Activated CD4-positive, alpha-beta memory T cell treated with anti-CD3 and anti-CD28 coated beads, Interleukin-2, amount 10 ng/mL, durations not matched to agents 7 days and 5 days (primary cell): ENCODE measurements at regions of chr1 and their contacts with region 1.

Region 1: DNA sequence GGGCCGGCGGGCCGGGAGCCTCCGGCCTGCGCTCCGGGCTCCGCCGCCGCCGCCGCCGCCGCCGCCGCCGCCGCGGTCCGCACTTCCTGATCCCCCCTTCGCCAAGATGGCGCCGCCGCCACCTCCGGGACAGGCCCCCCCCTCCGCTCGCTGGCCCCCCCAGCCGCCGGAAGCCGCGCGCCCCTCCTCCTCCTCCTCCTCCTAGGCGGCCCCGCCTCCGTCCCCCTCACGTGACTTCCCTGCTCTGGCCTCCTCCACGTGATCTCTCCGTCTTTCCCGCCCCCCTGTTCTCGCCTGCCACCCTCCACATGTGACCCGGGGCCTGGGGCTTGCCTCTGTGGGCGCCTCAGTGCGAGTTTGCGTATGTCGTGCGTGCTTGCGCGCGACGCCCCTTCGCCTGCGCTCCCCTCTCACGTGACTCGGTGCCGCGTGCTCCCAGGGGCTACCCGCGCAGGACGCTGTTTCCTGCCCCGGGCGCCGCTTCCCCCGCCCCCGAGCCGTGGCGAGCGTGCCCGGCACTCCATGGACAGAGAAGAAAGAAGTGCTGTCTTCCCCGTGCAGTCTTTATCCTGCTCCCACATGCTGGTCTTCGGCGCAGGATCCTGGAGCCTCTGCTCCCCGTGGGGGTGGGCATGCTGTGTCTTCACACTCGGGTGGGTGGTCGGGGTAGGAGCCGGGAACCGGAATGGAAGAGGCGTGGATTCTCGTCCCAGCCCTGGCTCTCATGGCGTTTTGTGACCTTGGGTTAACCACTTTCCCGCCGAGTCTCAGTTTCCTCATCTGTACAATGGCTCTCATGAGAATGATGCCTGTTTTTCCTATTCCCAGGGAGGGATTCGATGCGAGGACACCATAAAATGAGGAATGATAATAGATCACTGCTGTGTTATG is at the start of gene UBE2Q1:
- DNase-seq: peak; percentile 99
- H3K4me3 Mint-ChIP-seq: peak within 1 kb of the TSS; percentile 87
- H3K27ac Mint-ChIP-seq: peak within 1 kb of the TSS; percentile 81
- H3K4me1 Mint-ChIP-seq: peaks cover 43% of the 10 kb centered on the region
- H3K27me3 Mint-ChIP-seq: no peaks in the 10 kb centered on the region
- total RNA-seq, gene UBE2Q1: 118 to 122 TPM

Region 2: GRCh38 chr1:154442006-154442740 is 116.6 kb before region 1 on chr1:
- CTCF ChIA-PET with region 1: no interaction called
- POLR2A ChIA-PET with region 1: no interaction called
- DNase-seq: no peak
- H3K4me3 Mint-ChIP-seq: no peak overlapping the region
- H3K27ac Mint-ChIP-seq: no peak overlapping the region
- H3K4me1 Mint-ChIP-seq: peaks cover 60% of the 10 kb centered on the region
- H3K27me3 Mint-ChIP-seq: peaks cover 23% of the 10 kb centered on the region

Region 3: DNA sequence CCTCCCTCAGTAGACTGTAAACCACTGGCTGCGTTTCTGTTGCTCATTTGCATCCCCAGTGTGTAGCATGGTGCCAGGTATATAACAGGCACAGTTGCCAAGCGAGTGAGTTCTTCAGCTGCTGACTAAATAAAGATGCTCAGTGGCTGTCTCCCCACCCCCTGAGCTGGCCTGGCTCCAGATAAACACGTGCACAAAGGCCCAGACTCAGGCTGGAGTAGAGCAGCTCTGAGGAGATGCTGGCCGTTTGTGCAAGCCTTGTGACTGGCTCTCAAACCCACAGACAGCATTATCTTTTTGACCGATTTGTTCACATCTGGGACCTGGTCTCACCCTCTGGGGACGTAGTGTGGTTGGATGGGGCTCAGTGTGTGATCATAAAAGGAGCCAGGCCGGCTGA is 15.9 kb after region 1 on chr1:
- CTCF ChIA-PET with region 1: interaction called, 16 read pairs
- POLR2A ChIA-PET with region 1: interaction called, 6 read pairs
- DNase-seq: no peak
- H3K4me3 Mint-ChIP-seq: no peak overlapping the region
- H3K27ac Mint-ChIP-seq: no peak overlapping the region
- H3K4me1 Mint-ChIP-seq: peaks cover 3% of the 10 kb centered on the region
- H3K27me3 Mint-ChIP-seq: peaks cover 8% of the 10 kb centered on the region

Region 4: GRCh38 chr1:154669464-154670282 is 110.9 kb after region 1 on chr1:
- CTCF ChIA-PET with region 1: interaction called, 10 read pairs
- POLR2A ChIA-PET with region 1: no interaction called
- DNase-seq: peak; percentile 78
- H3K4me3 Mint-ChIP-seq: no peak overlapping the region
- H3K27ac Mint-ChIP-seq: no peak overlapping the region
- H3K4me1 Mint-ChIP-seq: peaks cover 2% of the 10 kb centered on the region
- H3K27me3 Mint-ChIP-seq: peaks cover 7% of the 10 kb centered on the region

Region 5: DNA sequence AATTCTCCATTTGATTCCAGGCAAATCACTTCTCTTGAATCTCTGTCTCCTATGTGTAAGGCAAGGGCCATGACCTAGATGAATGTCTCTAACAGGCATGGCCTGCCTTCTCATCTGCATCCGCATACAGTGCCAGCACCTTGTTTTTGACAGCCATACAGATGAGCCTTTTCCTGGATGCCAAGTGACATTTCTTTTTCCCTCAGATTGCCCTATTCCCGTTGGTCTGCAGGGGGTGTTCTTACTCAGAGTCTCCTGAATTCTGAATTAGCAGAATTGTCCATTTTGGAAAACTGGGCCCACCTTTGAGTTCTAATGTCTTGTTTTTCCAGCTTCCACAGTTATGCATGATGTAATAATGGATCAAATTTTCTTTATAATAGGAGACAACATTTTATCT is 137.2 kb after region 1 on chr1:
- CTCF ChIA-PET with region 1: no interaction called
- POLR2A ChIA-PET with region 1: no interaction called
- DNase-seq: no peak
- H3K4me3 Mint-ChIP-seq: no peak overlapping the region
- H3K27ac Mint-ChIP-seq: no peak overlapping the region
- H3K4me1 Mint-ChIP-seq: no peaks in the 10 kb centered on the region
- H3K27me3 Mint-ChIP-seq: peaks cover 30% of the 10 kb centered on the region

Region 6: DNA sequence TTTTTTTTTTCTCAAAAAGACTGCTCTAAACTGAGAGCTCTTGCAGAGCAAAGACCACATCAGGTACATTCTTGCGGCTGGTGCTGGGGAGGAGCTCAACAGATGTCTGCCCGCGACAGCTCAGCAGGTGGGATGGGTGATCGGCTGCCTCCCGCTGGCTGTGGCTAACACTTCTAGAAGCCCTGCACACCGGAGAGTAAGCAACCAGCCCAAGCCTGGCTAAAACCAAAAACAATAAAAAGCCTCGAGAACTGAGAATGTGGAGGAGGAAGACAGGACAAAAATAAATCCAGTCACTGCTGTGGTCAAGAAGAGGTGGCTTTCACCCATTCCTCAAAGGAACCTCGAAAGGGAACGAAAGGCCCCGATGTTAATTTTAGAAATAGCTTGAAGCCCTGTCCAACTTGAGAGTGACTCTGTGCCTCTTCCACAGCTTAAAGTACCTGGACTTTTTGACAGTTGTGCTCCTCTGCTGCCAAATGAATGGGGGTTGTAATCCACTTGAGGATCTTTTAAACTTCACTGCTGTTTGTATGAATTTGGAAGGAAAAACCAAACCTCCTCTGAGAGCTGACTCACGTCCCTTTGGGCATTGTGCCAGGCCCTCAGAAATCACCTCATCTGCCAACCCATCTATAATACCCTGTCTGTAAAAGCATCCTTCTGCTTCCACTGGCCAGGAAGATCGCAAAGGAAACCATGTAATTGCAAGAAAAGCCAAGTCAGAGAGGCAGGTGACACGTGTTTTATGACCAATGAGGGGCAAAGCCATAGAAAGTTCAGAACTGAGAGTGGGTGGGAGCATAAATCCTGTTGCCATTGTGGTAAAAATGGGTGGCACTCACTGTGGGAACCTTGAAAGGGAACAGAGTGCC is 232.7 kb after region 1 on chr1:
- CTCF ChIA-PET with region 1: interaction called, 11 read pairs
- POLR2A ChIA-PET with region 1: no interaction called
- DNase-seq: peak; percentile 78
- H3K4me3 Mint-ChIP-seq: peak overlapping the region; percentile 5
- H3K27ac Mint-ChIP-seq: peak overlapping the region; percentile 61
- H3K4me1 Mint-ChIP-seq: peaks cover 26% of the 10 kb centered on the region
- H3K27me3 Mint-ChIP-seq: peaks cover 42% of the 10 kb centered on the region

Region 7: DNA sequence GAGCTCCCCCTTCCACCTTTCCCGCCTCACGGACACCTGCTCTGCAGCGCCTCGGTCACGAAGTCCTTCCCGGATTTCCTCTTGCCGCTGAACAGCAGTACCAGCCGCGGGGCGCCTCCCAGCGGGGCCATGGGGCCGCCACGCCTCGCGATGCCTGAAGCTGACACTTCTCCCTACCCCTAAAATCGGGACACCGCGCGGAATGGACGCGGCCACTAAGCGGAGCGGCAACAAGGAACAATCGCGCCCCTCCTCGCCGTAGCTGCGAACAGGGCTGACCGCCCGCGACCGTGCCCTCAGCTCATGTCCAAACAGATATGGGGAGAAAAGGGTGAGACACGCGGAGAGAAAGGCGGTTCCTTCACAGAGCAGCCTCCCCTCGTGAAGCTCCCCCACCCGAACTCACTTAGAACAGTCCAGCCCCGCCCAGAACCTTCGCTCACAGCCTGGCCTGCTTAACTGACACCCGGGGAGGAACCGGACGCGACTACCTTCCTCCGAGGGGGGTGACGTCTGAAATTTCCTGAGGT is 377.8 kb after region 1 on chr1 and contains the start of gene PMVK:
- CTCF ChIA-PET with region 1: interaction called, 11 read pairs
- POLR2A ChIA-PET with region 1: interaction called, 7 read pairs
- DNase-seq: peak; percentile 96
- H3K4me3 Mint-ChIP-seq: peak within 1 kb of the TSS; percentile 88
- H3K27ac Mint-ChIP-seq: peak within 1 kb of the TSS; percentile 94
- H3K4me1 Mint-ChIP-seq: peaks cover 59% of the 10 kb centered on the region
- H3K27me3 Mint-ChIP-seq: no peaks in the 10 kb centered on the region
- total RNA-seq, gene PMVK: 40.7 to 41.8 TPM

Region 8: DNA sequence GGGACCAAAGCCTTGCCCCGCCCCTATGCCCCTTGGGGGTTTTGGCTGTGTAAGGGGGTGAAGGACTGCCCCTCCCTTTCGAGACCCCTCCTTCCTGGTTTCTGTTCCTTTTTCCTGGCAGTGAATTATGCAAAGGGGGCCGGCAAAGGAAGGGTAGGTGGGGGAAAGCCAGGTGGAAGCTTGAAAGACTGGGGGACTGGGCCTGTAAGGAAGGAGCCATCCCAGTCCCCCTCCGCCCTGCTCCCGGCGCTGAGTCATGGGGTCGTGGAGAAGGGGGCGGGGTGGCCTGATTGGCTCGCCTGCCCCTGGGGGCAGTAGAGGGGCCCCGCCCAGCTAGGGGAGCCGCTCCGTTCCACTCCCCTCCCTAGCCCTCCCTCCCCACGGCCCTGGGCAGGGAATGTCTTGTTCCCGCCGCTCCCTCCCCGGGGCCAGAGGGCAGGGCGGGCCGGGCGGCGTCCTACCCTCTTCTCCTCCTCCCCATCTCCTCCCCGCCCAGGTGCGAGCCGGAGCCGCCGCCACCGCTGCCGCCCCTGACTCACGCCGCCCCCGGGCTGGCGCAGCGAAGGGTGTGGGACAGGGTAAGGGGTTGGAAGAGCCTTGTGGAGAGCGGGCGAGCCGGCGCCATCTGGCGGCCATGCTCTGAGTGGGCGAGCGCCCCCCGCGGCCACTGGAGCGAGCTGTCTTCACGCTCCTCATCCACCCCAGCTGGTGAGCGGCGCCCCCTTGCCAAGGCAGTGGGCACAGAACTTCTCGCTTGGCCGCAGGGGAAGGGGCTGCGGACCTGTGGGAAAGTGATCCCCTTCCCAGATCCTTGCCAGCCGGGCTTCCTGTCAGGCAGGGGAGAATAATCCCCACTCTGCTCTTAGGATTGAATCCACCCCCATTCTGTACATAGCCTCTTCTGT is 458.5 kb after region 1 on chr1:
- CTCF ChIA-PET with region 1: interaction called, 10 read pairs
- POLR2A ChIA-PET with region 1: no interaction called
- DNase-seq: peak; percentile 87
- H3K4me3 Mint-ChIP-seq: peak overlapping the region; percentile 7
- H3K27ac Mint-ChIP-seq: peak overlapping the region; percentile 26
- H3K4me1 Mint-ChIP-seq: peaks cover 63% of the 10 kb centered on the region
- H3K27me3 Mint-ChIP-seq: no peaks in the 10 kb centered on the region

Region 9: GRCh38 chr1:155084722-155085503 is 526.1 kb after region 1 on chr1:
- CTCF ChIA-PET with region 1: interaction called, 10 read pairs
- POLR2A ChIA-PET with region 1: no interaction called
- DNase-seq: peak; percentile 93
- H3K4me3 Mint-ChIP-seq: peak overlapping the region; percentile 90
- H3K27ac Mint-ChIP-seq: peak overlapping the region; percentile 82
- H3K4me1 Mint-ChIP-seq: peaks cover 44% of the 10 kb centered on the region
- H3K27me3 Mint-ChIP-seq: peaks cover 35% of the 10 kb centered on the region